Activated CD4-positive, alpha-beta memory T cell treated with anti-CD3 and anti-CD28 coated beads, Interleukin-2, amount 10 ng/mL, durations not matched to agents 7 days and 5 days (primary cell): ENCODE measurements at regions of chr17 and their contacts with region 1.

Region 1: GRCh38 chr17:1724506-1725362 is at the start of gene WDR81:
- DNase-seq: peak; percentile 91
- H3K4me3 Mint-ChIP-seq: peak within 1 kb of the TSS; percentile 72
- H3K27ac Mint-ChIP-seq: peak within 1 kb of the TSS; percentile 82
- H3K4me1 Mint-ChIP-seq: peaks cover 53% of the 10 kb centered on the region
- H3K27me3 Mint-ChIP-seq: no peaks in the 10 kb centered on the region
- total RNA-seq, gene WDR81: 33.3 to 35.1 TPM

Region 2: DNA sequence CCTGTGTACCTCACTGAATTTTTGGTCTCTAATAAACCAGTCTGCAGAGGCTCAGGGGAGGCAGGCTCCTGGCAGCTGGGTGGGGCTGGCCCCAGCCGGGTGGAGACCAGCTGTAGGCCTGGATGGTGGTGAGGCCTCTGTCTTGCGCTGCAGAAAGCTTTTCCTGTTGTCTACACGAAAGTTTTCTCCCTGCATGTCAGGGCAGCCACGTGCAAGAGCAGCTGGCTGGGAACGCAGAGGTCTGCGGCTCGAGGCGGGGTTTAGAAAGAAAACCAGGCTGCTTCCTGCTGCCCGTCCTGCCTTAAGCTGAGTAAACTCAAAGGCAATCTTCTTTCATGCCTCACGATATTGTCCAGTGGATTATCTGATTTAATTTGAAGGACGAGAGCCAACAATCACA is 39.5 kb after region 1 on chr17:
- CTCF ChIA-PET with region 1: interaction called, 44 read pairs
- POLR2A ChIA-PET with region 1: interaction called, 35 read pairs
- DNase-seq: peak; percentile 81
- H3K4me3 Mint-ChIP-seq: no peak overlapping the region
- H3K27ac Mint-ChIP-seq: peak overlapping the region; percentile 89
- H3K4me1 Mint-ChIP-seq: peaks cover 31% of the 10 kb centered on the region
- H3K27me3 Mint-ChIP-seq: no peaks in the 10 kb centered on the region

Region 3: DNA sequence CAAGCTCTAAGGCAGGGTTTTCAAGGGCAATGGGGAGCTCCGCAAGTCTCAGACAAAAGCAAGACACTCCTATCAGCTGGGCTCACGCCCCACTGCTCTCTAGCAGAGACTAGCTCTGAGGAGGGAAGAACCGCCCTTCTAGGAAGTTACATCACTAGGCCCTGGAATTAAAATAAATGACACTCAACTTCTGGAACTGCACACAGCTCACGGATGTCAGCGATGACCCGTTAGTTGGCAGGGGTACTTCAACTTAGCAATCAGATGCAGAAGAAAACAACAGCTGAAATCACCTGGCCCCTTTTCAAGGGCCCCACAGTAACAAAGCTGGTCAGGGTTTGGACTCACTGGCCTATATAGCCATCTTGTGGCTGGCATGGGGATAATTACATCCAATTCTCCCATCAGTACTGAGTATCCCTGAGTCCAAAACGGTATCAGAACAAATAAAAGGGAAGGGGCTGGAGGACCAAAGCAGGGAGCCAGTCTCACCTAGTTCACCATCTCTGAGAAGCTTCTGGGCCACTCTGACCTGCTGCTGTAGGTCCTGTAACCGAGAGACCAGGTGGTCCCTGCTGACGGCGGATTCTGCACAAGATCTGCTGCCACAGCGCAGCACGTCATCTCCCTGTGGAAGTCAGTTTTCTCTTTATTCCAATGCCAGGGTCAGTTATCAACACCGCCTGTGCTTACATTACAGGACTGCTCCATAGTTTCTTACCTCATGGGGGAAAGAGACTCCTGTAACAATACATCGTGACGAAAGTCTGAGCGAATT is 59.3 kb after region 1 on chr17:
- CTCF ChIA-PET with region 1: interaction called, 46 read pairs
- POLR2A ChIA-PET with region 1: interaction called, 5 read pairs
- DNase-seq: no peak
- H3K4me3 Mint-ChIP-seq: no peak overlapping the region
- H3K27ac Mint-ChIP-seq: no peak overlapping the region
- H3K4me1 Mint-ChIP-seq: peaks cover 5% of the 10 kb centered on the region
- H3K27me3 Mint-ChIP-seq: no peaks in the 10 kb centered on the region

Region 4: GRCh38 chr17:1793447-1793806 is 68.7 kb after region 1 on chr17:
- CTCF ChIA-PET with region 1: interaction called, 14 read pairs
- POLR2A ChIA-PET with region 1: interaction called, 3 read pairs
- DNase-seq: no peak
- H3K4me3 Mint-ChIP-seq: no peak overlapping the region
- H3K27ac Mint-ChIP-seq: no peak overlapping the region
- H3K4me1 Mint-ChIP-seq: peaks cover 3% of the 10 kb centered on the region
- H3K27me3 Mint-ChIP-seq: no peaks in the 10 kb centered on the region

Region 5: GRCh38 chr17:1829592-1830257 is 105.0 kb after region 1 on chr17 and contains the starts of genes RPA1 and SMYD4:
- CTCF ChIA-PET with region 1: interaction called, 4 read pairs
- POLR2A ChIA-PET with region 1: interaction called, 14 read pairs
- DNase-seq: peak; percentile 92
- H3K4me3 Mint-ChIP-seq: peak within 1 kb of the TSS; percentile 96
- H3K27ac Mint-ChIP-seq: peak within 1 kb of the TSS; percentile 84
- H3K4me1 Mint-ChIP-seq: peaks cover 69% of the 10 kb centered on the region
- H3K27me3 Mint-ChIP-seq: no peaks in the 10 kb centered on the region
- total RNA-seq, gene RPA1: 176 to 186 TPM
- total RNA-seq, gene SMYD4: 27.4 to 29.3 TPM

Region 6: GRCh38 chr17:1865252-1866037 is 140.7 kb after region 1 on chr17:
- CTCF ChIA-PET with region 1: interaction called, 22 read pairs
- POLR2A ChIA-PET with region 1: interaction called, 4 read pairs
- DNase-seq: peak; percentile 63
- H3K4me3 Mint-ChIP-seq: no peak overlapping the region
- H3K27ac Mint-ChIP-seq: no peak overlapping the region
- H3K4me1 Mint-ChIP-seq: peaks cover 21% of the 10 kb centered on the region
- H3K27me3 Mint-ChIP-seq: no peaks in the 10 kb centered on the region

Region 7: DNA sequence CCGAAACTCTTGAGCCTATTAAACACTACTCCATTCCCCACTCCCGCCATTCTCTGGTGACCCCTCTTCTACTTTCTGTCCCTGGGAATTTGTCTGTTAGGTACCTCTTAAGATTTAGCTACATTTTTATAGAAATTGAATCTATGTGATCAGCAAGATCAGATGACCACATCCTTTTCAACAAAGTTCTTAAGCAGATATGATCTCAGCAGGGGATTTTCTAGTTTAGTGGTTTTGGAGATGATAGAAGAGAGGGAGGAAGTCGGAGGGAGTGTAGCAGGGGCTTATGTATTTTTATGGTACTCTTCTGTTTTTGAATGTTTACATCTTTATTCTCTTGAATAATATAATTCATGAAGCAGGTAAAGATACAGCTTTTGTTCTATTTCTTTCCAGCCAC is 145.9 kb after region 1 on chr17:
- CTCF ChIA-PET with region 1: interaction called, 22 read pairs
- POLR2A ChIA-PET with region 1: interaction called, 4 read pairs
- DNase-seq: no peak
- H3K4me3 Mint-ChIP-seq: peak overlapping the region; percentile 21
- H3K27ac Mint-ChIP-seq: peak overlapping the region; percentile 81
- H3K4me1 Mint-ChIP-seq: peaks cover 62% of the 10 kb centered on the region
- H3K27me3 Mint-ChIP-seq: no peaks in the 10 kb centered on the region

Region 8: GRCh38 chr17:1915889-1916288 is 191.2 kb after region 1 on chr17:
- CTCF ChIA-PET with region 1: no interaction called
- POLR2A ChIA-PET with region 1: no interaction called
- DNase-seq: no peak
- H3K4me3 Mint-ChIP-seq: no peak overlapping the region
- H3K27ac Mint-ChIP-seq: no peak overlapping the region
- H3K4me1 Mint-ChIP-seq: no peaks in the 10 kb centered on the region
- H3K27me3 Mint-ChIP-seq: peaks cover 18% of the 10 kb centered on the region